Transverse colon (tissue), 4 donors: ENCODE measurements at regions of chr5 and their contacts with region 1.

Region 1: GRCh38 chr5:87307796-87308423 is 40.2 kb downstream of the RASA1 start:
- DNase-seq: no peak
- H3K4me3 ChIP-seq: no peak overlapping the region
- H3K27ac ChIP-seq: no peak overlapping the region
- H3K4me1 ChIP-seq: peaks cover 0 to 18% (median 7%) of the 10 kb centered on the region in 4 donors
- H3K27me3 ChIP-seq: no peaks in the 10 kb centered on the region
- CTCF ChIP-seq: no peak
- EP300 ChIP-seq: no peak
- POLR2A ChIP-seq: no peak

Region 2: DNA sequence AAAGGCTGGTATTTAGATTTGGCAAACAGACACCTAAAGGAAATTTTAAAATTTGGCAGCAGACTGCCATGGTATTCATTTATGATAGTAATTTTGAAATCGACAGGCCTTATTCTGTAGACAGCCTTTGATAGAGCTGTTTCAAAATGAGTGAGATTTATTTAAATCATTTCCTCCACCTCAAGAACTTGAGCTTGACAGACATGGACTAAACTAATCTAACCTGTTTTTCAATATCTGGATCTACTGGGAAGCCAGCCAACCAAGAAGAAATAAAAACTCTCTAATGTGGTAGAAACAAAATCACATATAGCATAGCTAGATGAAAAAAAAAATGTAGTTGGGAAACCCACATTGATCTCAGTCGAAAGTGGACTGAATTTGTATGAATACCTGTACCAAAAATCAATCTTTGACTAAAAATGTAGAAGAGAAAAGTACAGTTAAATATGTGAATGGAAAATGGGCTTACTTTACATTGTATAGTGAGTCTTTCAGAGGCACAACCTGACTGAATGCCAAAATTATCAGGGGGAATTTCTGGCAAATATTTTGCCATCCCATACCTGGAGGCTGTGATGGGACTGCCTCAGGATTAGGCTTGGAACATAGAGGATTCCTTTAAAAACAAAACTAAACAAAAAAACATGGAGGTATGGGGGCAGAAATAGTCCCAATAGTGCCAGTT is 97.0 kb before region 1 on chr5:
- in situ Hi-C with region 1: no loop called
- intact Hi-C with region 1: no loop called
- DNase-seq: no peak
- H3K4me3 ChIP-seq: no peak overlapping the region
- H3K27ac ChIP-seq: no peak overlapping the region
- H3K4me1 ChIP-seq: peaks cover 0 to 13% (median 3%) of the 10 kb centered on the region in 4 donors
- H3K27me3 ChIP-seq: no peaks in the 10 kb centered on the region
- CTCF ChIP-seq: no peak
- EP300 ChIP-seq: no peak
- POLR2A ChIP-seq: no peak

Region 3: DNA sequence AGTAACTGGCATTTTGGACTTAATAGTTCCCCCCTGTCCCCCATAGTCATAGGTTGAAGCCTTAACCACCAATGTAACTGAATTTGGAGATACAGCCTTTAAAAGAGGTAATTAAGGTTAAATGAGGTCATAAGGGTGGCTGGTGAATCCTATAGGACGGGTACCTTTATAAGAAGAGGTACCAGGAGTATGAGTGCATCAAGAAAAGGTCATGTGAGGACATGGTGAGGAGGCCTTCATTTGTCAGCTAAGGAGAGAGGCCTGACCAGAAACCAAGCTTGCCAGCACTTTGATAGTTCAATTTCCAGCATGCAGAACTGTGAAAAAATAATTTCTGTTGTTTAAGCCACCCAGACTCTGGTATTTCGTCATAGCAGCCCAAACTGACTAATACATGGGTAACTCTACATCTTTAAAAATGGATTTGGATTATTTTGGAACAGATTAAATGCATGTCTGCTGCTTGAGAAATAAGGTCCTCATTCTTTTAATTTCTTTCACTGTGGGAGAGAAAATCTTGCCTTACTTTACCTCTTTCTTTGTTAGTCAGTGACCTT is 30.6 kb before region 1 on chr5:
- in situ Hi-C with region 1: no loop called
- intact Hi-C with region 1: loop called (anchors 1 kb)
- DNase-seq: no peak
- H3K4me3 ChIP-seq: no peak overlapping the region
- H3K27ac ChIP-seq: no peak overlapping the region
- H3K4me1 ChIP-seq: peaks cover 0 to 14% (median 8%) of the 10 kb centered on the region in 4 donors
- H3K27me3 ChIP-seq: no peaks in the 10 kb centered on the region
- CTCF ChIP-seq: no peak
- EP300 ChIP-seq: no peak
- POLR2A ChIP-seq: no peak

Region 4: DNA sequence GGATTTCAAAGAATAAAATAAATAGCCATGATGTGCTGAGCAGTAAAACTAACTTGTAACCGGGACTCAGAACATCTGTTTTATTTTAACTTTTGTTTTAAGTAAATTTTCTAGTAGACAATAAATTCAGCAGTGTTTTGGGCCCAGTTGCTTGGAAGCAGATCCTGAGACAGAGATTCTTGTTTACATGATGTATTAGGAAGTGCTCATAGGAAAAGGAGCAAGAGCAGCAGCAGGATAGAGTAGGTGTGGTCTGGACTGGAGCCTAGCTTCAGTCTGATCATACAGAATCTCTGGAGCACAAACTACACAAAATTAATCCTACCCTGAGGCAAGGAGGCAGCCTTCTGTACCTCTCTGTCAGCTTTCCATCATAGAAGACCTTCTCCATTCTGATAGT is 244.0 kb after region 1 on chr5:
- in situ Hi-C with region 1: no loop called
- intact Hi-C with region 1: no loop called
- DNase-seq: no peak
- H3K4me3 ChIP-seq: no peak overlapping the region
- H3K27ac ChIP-seq: peak overlapping the region in 2 of 4 donors; percentile 7 to 41
- H3K4me1 ChIP-seq: no peaks in the 10 kb centered on the region
- H3K27me3 ChIP-seq: no peaks in the 10 kb centered on the region
- CTCF ChIP-seq: no peak
- EP300 ChIP-seq: no peak
- POLR2A ChIP-seq: no peak